ENCODE measurements at regions of chr7 and their contacts with region 1.

Region 1: DNA sequence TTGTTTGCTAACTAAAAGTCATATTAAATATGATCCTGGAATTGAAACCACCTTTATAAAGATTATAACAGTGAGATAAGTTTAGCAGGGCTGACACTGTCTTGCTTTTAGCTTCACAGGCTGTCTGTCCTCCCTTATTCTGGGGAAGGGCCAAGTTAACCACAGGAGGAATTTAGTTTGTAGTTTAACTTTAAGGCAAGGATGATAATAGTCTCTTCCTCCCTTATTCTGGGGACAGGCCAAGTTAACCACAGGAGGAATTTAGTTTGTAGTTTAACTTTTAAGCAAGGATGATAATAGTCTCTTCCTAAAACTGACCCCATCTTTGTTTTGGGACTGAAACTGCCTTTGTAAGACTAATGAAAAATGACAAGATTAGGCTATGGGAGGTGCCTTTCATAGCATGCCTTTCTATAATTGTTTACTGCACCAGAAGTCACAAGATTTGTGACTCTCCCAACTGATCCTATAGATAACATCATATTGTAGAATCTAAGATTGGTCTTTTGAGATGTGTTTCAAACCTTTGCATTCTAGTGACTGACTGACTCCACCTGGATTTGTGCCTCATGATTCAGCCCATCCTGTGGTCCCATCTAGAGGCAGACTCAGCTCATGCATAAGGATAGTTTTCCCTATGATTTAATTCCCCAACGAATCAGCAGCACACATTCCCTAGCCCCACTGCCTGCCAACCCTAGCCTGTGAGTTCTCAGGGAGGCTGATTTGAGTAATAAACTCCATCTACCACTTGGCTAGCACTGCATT is 212.0 kb downstream of the MAGI2 start:
- DNase-seq: no peak
- ATAC-seq: no peak
- H3K4me3 ChIP-seq: no peak overlapping the region
- H3K27ac ChIP-seq: no peak overlapping the region
- H3K4me1 ChIP-seq: peaks cover 0 to 4% (median 0%) of the 10 kb centered on the region in 9 donors
- H3K27me3 ChIP-seq: no peaks in the 10 kb centered on the region
- CTCF ChIP-seq: no peak

Region 2: GRCh38 chr7:77409739-77410547 is 1831.5 kb before region 1 on chr7:
- intact Hi-C with region 1: loop called in 1 of 10 experiments (anchors 5 kb)
- DNase-seq: no peak
- ATAC-seq: peak in 3 of 8 donors; percentile 40 to 80 (median 53)
- H3K4me3 ChIP-seq: no peak overlapping the region
- H3K27ac ChIP-seq: peak overlapping the region in 1 of 10 donors; percentile 81
- H3K4me1 ChIP-seq: peaks cover 0 to 57% (median 0%) of the 10 kb centered on the region in 9 donors
- H3K27me3 ChIP-seq: no peaks in the 10 kb centered on the region
- CTCF ChIP-seq: no peak

Region 3: GRCh38 chr7:79050603-79051002 is 190.9 kb before region 1 on chr7:
- intact Hi-C with region 1: no loop called
- DNase-seq: no peak
- ATAC-seq: no peak
- H3K4me3 ChIP-seq: no peak overlapping the region
- H3K27ac ChIP-seq: no peak overlapping the region
- H3K4me1 ChIP-seq: no peaks in the 10 kb centered on the region
- H3K27me3 ChIP-seq: no peaks in the 10 kb centered on the region
- CTCF ChIP-seq: no peak

Region 4: GRCh38 chr7:79176859-79177477 is 64.5 kb before region 1 on chr7:
- intact Hi-C with region 1: no loop called
- DNase-seq: peak in 1 of 2 donors; percentile 7
- ATAC-seq: peak in 4 of 8 donors; percentile 54 to 61 (median 57)
- H3K4me3 ChIP-seq: no peak overlapping the region
- H3K27ac ChIP-seq: no peak overlapping the region
- H3K4me1 ChIP-seq: peaks cover 0 to 3% (median 0%) of the 10 kb centered on the region in 9 donors
- H3K27me3 ChIP-seq: no peaks in the 10 kb centered on the region
- CTCF ChIP-seq: peak; percentile 15 to 75 (median 54)

Region 5: GRCh38 chr7:79320741-79321473 is 79.4 kb after region 1 on chr7:
- intact Hi-C with region 1: no loop called
- DNase-seq: no peak
- ATAC-seq: no peak
- H3K4me3 ChIP-seq: no peak overlapping the region
- H3K27ac ChIP-seq: no peak overlapping the region
- H3K4me1 ChIP-seq: peaks cover 0 to 5% (median 0%) of the 10 kb centered on the region in 9 donors
- H3K27me3 ChIP-seq: no peaks in the 10 kb centered on the region
- CTCF ChIP-seq: no peak

Measured in heart right ventricle (tissue), 16 donors.